Psoas muscle (tissue), 8 donors: ENCODE measurements at regions of chr11 and their contacts with region 1.

Region 1: GRCh38 chr11:76207642-76208401 is 1.5 kb upstream of the WNT11 start:
- DNase-seq: peak; percentile 85 to 90
- ATAC-seq: peak; percentile 75 to 81 (median 80)
- H3K4me3 ChIP-seq: peak overlapping the region; percentile 81
- H3K27ac ChIP-seq: peak overlapping the region; percentile 84
- H3K4me1 ChIP-seq: peaks cover 18% of the 10 kb centered on the region
- H3K27me3 ChIP-seq: no peaks in the 10 kb centered on the region
- CTCF ChIP-seq: peak; percentile 96

Region 2: GRCh38 chr11:75896843-75897419 is 310.9 kb before region 1 on chr11:
- intact Hi-C with region 1: loop called in 1 of 2 experiments (anchors 5 kb)
- DNase-seq: no peak
- ATAC-seq: peak in 3 of 4 donors; percentile 48 to 76 (median 54)
- H3K4me3 ChIP-seq: no peak overlapping the region
- H3K27ac ChIP-seq: no peak overlapping the region
- H3K4me1 ChIP-seq: no peaks in the 10 kb centered on the region
- H3K27me3 ChIP-seq: no peaks in the 10 kb centered on the region
- CTCF ChIP-seq: peak; percentile 74

Region 3: DNA sequence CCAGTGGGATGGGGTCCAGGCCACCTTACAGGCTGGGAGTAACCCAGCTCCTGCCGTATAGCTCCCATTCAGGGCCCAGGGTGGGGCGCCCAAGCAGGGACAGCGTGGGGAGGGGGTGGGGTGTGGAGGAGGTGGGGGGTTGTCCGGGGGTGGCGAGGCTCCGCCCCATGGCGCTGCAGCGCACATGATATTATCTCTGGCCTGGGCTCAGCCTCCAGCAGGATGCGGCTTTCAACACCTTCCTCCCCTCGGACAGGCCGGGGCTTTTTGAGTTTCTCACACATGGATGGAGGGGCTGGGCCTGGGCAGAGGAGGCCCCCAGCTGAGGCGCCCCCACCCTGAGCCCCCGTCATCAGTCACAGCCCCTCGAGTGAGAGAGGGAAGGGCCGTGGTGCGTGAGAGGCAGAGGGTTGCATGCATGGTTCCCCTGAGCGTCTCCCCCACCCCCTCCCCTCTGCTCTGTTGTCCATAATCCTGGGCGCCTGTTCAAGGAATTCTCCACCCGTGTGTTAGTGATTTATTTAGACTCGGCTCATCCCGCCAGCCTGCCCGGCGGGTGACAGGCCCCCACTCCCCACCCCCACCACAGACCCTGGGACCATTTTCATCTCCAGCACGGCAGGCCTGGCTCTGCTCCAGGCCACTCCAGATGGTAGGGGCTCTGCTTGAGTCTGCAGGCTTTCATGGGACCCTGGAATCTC is 46.4 kb before region 1 on chr11:
- intact Hi-C with region 1: no loop called
- DNase-seq: no peak
- ATAC-seq: peak; percentile 50 to 77 (median 72)
- H3K4me3 ChIP-seq: peak overlapping the region; percentile 30
- H3K27ac ChIP-seq: no peak overlapping the region
- H3K4me1 ChIP-seq: peaks cover 8% of the 10 kb centered on the region
- H3K27me3 ChIP-seq: no peaks in the 10 kb centered on the region
- CTCF ChIP-seq: no peak

Region 4: GRCh38 chr11:76235233-76236091 is 27.6 kb after region 1 on chr11:
- intact Hi-C with region 1: loop called in 1 of 2 experiments (anchors 2 kb)
- DNase-seq: peak; percentile 86 to 94
- ATAC-seq: peak; percentile 80 to 88 (median 86)
- H3K4me3 ChIP-seq: peak overlapping the region; percentile 78
- H3K27ac ChIP-seq: peak overlapping the region; percentile 80
- H3K4me1 ChIP-seq: peaks cover 3% of the 10 kb centered on the region
- H3K27me3 ChIP-seq: no peaks in the 10 kb centered on the region
- CTCF ChIP-seq: no peak

Region 5: GRCh38 chr11:76318744-76319384 is 111.0 kb after region 1 on chr11:
- intact Hi-C with region 1: loop called (anchors 1 to 2 kb)
- DNase-seq: peak; percentile 79 to 91
- ATAC-seq: peak; percentile 93 to 98 (median 95)
- H3K4me3 ChIP-seq: no peak overlapping the region
- H3K27ac ChIP-seq: no peak overlapping the region
- H3K4me1 ChIP-seq: no peaks in the 10 kb centered on the region
- H3K27me3 ChIP-seq: peaks cover 0 to 9% (median 0%) of the 10 kb centered on the region in 3 donors
- CTCF ChIP-seq: peak; percentile 88

Region 6: GRCh38 chr11:76444384-76445123 is 236.7 kb after region 1 on chr11 and contains the start of gene EMSY:
- intact Hi-C with region 1: loop called in 1 of 2 experiments (anchors 5 kb)
- DNase-seq: peak; percentile 95 to 98
- ATAC-seq: peak; percentile 95 to 97 (median 97)
- H3K4me3 ChIP-seq: peak within 1 kb of the TSS; percentile 96
- H3K27ac ChIP-seq: peak within 1 kb of the TSS; percentile 91
- H3K4me1 ChIP-seq: no peaks in the 10 kb centered on the region
- H3K27me3 ChIP-seq: no peaks in the 10 kb centered on the region
- CTCF ChIP-seq: no peak
- total RNA-seq, gene EMSY: 12.7 to 17.2 (median 15.9) TPM

Region 7: DNA sequence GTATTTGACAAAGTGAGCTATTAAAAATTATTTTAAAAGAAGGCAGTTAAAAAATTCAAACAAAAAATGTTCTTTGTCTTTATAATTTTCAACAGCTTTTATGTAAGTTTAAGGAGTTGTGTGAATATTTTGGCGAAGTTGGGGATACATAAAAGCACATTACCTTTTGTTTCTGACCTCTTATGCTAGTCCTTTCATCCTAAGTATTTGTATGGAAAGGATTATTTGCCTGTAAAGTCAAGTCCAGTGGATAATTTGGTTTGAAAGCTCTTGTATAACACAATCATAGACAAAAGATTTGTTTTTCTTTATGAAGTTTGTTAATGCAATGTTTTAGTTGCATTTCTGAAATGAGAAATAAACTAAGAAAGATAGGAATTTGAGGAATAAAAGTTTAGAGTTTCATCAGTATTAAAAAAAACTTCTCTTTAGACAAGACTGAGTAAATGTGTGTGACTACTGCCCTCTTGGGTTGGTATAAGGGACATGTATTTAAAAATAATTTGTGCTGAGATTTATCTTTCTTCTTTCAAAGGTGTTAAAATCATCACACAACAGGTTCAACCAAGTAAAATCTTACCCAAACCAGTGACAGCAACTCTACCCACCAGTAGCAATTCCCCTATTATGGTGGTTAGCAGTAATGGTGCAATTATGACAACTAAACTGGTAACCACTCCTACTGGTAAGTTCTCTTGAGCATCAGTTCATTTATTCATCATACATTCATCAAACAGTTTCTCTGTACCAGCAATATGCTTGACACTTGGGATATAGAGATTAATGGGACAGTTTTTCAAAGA is 305.2 kb after region 1 on chr11:
- intact Hi-C with region 1: loop called in 1 of 2 experiments (anchors 5 kb)
- DNase-seq: no peak
- ATAC-seq: no peak
- H3K4me3 ChIP-seq: no peak overlapping the region
- H3K27ac ChIP-seq: no peak overlapping the region
- H3K4me1 ChIP-seq: no peaks in the 10 kb centered on the region
- H3K27me3 ChIP-seq: no peaks in the 10 kb centered on the region
- CTCF ChIP-seq: peak; percentile 36

Region 8: DNA sequence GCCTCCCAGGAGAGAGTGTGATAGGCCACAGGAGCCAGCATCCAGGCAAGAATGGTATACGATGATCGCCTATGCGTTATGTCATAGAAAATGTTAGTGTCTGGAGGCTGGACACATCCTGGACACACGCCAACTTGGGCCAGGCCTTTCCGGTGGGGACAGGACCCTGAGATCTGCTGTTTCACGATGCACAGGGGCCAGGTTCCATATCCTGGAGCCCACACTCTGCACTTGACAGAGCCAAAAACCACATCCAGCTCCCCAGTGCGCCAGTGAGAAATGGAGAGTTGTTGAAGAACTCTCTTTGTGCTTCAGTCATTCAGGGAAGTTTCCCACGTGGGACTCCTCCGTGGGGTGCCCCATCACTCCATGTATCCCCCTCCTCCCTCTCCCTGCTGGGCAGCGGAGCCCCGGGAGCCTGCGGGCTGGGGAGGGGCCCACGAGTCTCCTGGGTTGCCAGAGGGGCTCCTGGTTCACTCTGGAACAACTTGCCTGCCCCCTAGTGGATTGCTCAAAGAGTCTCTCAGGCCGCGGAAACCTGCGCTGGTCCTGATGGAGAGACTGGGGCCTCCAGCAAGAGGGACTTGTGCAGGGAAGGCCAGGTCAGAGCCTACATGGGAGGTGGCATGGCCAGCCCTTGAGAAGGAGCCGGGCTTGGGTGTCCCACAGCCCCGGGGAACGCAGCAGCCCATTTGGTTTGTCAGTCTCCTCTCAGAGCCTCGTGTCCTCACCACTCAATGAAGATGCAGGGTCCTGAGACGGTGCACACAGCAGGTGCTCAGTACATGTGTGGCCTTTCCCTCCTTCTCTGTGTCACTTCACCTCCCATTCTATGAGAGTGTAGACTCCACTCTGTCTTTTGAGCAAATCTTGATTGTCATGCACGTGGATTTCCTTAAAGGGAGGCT is 472.9 kb after region 1 on chr11:
- intact Hi-C with region 1: loop called in 1 of 2 experiments (anchors 5 kb)
- DNase-seq: peak; percentile 61 to 75
- ATAC-seq: peak; percentile 46 to 79 (median 70)
- H3K4me3 ChIP-seq: no peak overlapping the region
- H3K27ac ChIP-seq: no peak overlapping the region
- H3K4me1 ChIP-seq: no peaks in the 10 kb centered on the region
- H3K27me3 ChIP-seq: no peaks in the 10 kb centered on the region
- CTCF ChIP-seq: peak; percentile 77